CD14-positive monocyte (primary cell): ENCODE measurements at regions of chr20 and their contacts with region 1.

Region 1: DNA sequence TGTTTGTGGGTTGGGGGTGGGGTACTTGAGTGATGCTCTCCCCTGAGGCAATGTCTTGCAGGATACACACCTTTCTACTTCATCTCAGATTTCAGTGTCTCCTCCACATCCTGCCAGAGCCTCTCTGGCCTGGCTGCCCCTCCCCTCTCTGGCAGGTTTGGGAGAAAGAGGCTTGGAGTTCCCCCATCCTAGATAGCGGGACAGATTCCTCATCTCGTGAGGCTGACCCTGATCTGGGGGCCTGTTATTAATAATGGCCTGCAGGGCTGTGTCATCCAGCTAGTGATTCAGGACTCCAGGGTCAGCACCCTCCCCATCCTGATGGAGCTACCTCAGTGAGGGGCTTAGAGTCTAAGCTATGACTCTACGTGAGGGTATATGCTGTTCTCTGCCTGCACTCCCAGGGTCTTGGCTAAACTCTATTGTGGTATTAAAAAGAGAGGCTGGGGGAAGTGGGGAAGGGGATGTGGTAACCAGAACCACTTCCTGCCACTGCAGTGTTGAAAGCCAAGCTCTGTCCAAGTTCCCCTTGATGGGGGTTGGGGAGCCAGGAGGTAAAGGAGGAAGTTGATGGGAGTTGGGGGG is 3.7 kb upstream of the MMP9 start:
- DNase-seq: peak; percentile 89 to 97 (median 97)
- H3K4me3 ChIP-seq: peak overlapping the region; percentile 10 to 66 (median 25)
- H3K4me3 Mint-ChIP-seq: peak overlapping the region; percentile 64 to 82
- H3K27ac ChIP-seq: peak overlapping the region; percentile 86 to 91
- H3K27ac Mint-ChIP-seq: peak overlapping the region; percentile 91 to 99 (median 96)
- H3K4me1 ChIP-seq: peaks cover 91 to 95% of the 10 kb centered on the region in 2 donors
- H3K4me1 Mint-ChIP-seq: peaks cover 89% of the 10 kb centered on the region
- H3K27me3 ChIP-seq: peaks cover 17 to 35% of the 10 kb centered on the region in 2 donors
- H3K27me3 Mint-ChIP-seq: peaks cover 36 to 61% (median 52%) of the 10 kb centered on the region in 3 donors
- CTCF ChIP-seq: no peak

Region 2: GRCh38 chr20:46206025-46206424 is 201.0 kb after region 1 on chr20:
- intact Hi-C with region 1: loop called (anchors 10 kb)
- DNase-seq: peak; percentile 89 to 98 (median 97)
- H3K4me3 ChIP-seq: peak overlapping the region in 1 of 3 experiments; percentile 69
- H3K4me3 Mint-ChIP-seq: peak overlapping the region; percentile 63 to 88
- H3K27ac ChIP-seq: peak overlapping the region; percentile 75 to 81
- H3K27ac Mint-ChIP-seq: peak overlapping the region; percentile 95 to 99 (median 97)
- H3K4me1 ChIP-seq: peaks cover 74 to 84% of the 10 kb centered on the region in 2 donors
- H3K4me1 Mint-ChIP-seq: peaks cover 76% of the 10 kb centered on the region
- H3K27me3 ChIP-seq: peaks cover 0 to 11% of the 10 kb centered on the region in 2 donors
- H3K27me3 Mint-ChIP-seq: peaks cover 5 to 27% (median 17%) of the 10 kb centered on the region in 3 donors
- CTCF ChIP-seq: no peak